ENCODE measurements at regions of chr15 and their contacts with region 1.

Region 1: GRCh38 chr15:63504247-63504978 is at the start of gene USP3:
- DNase-seq: peak; percentile 91
- CTCF ChIP-seq: peak; percentile 20

Region 2: GRCh38 chr15:63481105-63481810 is 23.2 kb before region 1 on chr15:
- CTCF ChIA-PET with region 1: interaction called, 95 read pairs
- POLR2A ChIA-PET with region 1: interaction called, 4 read pairs
- DNase-seq: no peak
- CTCF ChIP-seq: no peak

Region 3: GRCh38 chr15:63514531-63514943 is 10.1 kb after region 1 on chr15:
- CTCF ChIA-PET with region 1: interaction called, 18 read pairs
- POLR2A ChIA-PET with region 1: interaction called, 4 read pairs
- DNase-seq: no peak
- CTCF ChIP-seq: no peak

Region 4: GRCh38 chr15:63531586-63531985 is 27.2 kb after region 1 on chr15:
- CTCF ChIA-PET with region 1: interaction called, 18 read pairs
- POLR2A ChIA-PET with region 1: interaction called, 4 read pairs
- DNase-seq: no peak
- CTCF ChIP-seq: no peak

Region 5: GRCh38 chr15:63573533-63573932 is 69.1 kb after region 1 on chr15:
- CTCF ChIA-PET with region 1: no interaction called
- POLR2A ChIA-PET with region 1: no interaction called
- DNase-seq: no peak
- CTCF ChIP-seq: no peak